Calu3 (cell line): ENCODE measurements at regions of chr11 and their contacts with region 1.

Region 1: GRCh38 chr11:69540118-69540502 is 58.6 kb downstream of the LINC01488 start:
- DNase-seq: no peak
- H3K4me3 Mint-ChIP-seq: no peak overlapping the region
- H3K27ac Mint-ChIP-seq: no peak overlapping the region
- H3K4me1 Mint-ChIP-seq: peaks cover 22% of the 10 kb centered on the region
- H3K27me3 Mint-ChIP-seq: peaks cover 5% of the 10 kb centered on the region
- CTCF ChIP-seq: no peak

Region 2: DNA sequence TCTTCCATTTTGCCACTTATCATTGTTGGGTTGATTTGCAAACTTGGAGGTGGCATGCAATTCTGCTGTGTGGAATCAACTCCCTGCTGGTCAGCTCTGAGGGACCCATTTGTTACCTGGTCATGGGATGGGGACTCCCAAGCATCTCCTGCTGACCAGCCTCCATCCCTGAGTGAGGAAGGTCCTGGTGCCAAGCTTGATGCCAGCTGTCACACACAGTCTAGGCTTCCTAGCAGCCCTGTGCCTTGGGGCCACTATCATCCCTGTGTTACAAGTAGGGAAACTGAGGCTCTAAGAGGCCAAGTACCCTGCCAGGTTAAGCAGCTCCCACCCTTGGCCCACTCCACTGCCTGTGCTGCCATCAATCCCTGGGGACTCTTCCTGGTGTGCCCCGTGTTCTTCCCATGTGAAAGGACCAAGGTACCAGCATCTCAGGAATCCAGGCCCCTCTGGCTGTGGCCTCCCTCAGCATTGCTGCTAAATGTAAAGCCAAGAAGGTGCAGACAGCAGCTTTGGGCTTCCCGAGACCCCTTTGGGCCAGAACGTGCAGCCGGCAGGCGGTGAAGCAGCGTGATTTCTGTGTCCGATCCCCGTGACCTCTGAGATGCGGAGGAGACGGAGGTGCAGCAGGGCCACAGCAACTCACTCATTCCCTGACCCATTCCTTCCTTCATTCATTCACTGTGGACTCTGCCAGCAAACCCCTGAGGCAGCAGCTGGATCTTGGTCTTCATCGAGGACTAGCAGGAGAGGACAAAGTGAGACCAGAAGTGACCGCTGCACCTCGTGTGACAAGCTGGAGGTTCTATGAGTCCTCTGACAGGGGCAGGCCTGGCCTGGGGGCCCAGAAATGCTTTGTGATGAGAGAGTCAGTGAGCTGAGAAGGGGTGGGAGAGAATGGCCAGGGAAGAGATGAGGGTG is 196.4 kb before region 1 on chr11:
- CTCF ChIA-PET with region 1: interaction called, 15 read pairs
- intact Hi-C with region 1: no loop called
- DNase-seq: no peak
- H3K4me3 Mint-ChIP-seq: no peak overlapping the region
- H3K27ac Mint-ChIP-seq: no peak overlapping the region
- H3K4me1 Mint-ChIP-seq: peaks cover 22% of the 10 kb centered on the region
- H3K27me3 Mint-ChIP-seq: no peaks in the 10 kb centered on the region
- CTCF ChIP-seq: no peak

Region 3: DNA sequence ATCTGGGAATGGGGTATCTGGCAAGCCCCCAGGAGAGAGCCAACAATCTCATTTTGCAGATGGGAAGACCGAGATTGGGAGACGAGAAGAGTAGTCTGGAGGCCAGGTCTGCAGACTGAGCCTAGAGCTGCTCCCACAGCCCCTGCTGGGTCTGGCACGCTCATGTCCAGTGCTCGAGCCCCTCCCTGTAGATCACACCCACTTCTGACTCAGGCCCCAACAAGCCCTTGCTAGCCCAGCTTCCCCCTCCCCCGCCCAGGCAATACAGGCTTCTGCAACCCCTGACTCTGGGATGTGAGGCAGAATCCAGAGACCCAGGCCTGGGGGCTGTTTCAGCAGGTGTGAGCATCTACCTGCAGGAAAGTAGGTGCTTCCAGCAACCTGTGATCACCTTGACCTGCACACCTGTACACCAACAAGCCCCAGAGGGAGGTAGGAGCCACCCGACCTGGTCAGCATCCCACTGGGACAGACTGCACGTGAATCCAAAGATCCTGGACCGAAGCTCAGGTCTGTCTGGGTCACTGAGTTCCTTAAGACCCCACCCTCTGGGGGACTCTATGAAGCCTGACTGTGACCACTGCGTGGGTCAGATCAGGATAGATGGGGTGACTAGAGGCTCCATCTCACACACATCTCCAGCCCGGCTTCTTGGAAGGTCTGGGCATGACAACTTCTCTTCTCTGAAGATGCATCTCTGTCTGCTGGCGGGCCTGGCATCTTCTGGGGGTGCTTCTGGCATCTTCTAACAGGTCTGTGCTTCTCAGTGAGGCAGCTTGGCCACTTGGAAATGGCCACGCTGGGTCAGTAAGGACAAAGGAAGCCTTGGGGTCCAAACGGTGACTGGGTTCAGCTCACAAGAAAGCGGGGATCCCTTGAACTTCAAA is 29.4 kb before region 1 on chr11:
- CTCF ChIA-PET with region 1: no interaction called
- intact Hi-C with region 1: no loop called
- DNase-seq: no peak
- H3K4me3 Mint-ChIP-seq: no peak overlapping the region
- H3K27ac Mint-ChIP-seq: no peak overlapping the region
- H3K4me1 Mint-ChIP-seq: no peaks in the 10 kb centered on the region
- H3K27me3 Mint-ChIP-seq: no peaks in the 10 kb centered on the region
- CTCF ChIP-seq: no peak